ENCODE measurements at regions of chr6 and their contacts with region 1.

Region 1: DNA sequence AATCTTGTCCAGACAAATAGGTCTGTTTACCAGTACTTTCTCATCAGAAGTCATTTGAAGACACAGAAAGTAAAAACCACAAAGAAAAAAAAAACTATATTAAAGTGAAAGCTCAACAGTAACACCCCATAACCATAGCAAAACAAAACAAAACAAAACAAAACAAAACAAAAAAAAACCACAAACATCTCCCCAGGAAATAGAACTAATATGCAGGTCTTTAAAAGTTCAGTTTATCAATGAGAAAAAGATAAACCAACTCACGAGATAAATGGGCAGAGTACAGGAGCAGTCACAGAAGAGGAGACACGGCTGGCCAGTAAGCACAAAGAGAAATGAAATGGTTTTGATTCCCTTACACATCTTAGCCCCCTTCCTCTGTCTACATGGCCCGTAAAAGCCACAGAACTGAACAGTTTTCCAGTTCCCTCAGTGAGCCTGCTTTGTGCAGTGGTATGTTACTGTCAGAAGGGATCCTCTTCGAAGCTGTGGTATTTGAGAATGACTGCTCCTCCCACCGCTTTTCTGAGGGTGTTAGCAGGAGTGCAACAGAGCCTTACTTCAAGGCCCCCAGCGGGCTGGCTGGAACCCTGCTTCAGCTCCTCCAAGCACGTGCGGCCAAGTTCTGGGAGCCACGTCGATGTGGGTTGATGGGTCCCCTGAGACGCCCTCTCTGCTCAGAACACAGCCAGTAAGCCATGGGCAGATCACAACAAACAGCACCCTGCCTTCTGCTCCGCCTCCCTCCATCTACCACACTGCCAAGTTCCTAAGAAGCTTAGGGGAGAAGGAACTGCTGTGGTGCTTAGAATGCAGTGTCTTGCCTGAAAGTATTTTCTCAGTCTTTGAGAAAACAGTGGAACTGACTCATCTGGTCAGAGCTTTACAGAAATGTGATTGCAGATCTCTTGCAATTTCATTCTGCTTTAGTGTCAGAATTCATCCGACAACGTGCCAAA is 14.0 kb downstream of the UST start:
- DNase-seq: peak; percentile 73
- ATAC-seq: peak; percentile 54
- H3K4me3 Mint-ChIP-seq: peak overlapping the region; percentile 84
- H3K27ac Mint-ChIP-seq: peak overlapping the region; percentile 93
- H3K4me1 Mint-ChIP-seq: peaks cover 98% of the 10 kb centered on the region
- H3K27me3 Mint-ChIP-seq: no peaks in the 10 kb centered on the region
- CTCF ChIP-seq: no peak

Region 2: DNA sequence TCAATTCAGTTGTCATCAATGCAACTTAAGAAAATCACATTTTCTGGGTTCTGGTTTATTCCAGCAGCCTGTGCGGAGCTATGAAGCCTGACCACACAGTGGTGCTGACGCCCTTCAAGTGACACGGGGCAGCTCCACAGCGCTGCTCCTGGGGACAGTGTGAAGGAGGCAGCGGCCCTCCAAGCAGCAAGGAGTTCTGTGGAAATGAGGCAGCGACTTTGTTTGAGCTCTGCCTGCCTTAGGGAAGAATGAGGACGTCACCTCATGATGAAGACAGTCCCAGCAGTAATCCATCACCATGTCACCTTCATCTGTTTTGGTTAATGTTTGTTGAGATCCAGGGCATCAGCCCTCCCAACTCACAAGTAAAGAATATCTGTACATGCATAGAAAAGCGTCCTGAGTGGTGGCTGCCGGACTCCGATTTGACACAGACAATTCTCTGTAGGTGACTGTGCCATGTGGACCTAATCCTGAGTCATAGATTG is 182.6 kb before region 1 on chr6:
- CTCF ChIA-PET with region 1: interaction called, 11 read pairs
- POLR2A ChIA-PET with region 1: interaction called, 12 read pairs
- intact Hi-C with region 1: no loop called
- DNase-seq: peak; percentile 56
- ATAC-seq: peak; percentile 100
- H3K4me3 Mint-ChIP-seq: no peak overlapping the region
- H3K27ac Mint-ChIP-seq: peak overlapping the region; percentile 55
- H3K4me1 Mint-ChIP-seq: peaks cover 14% of the 10 kb centered on the region
- H3K27me3 Mint-ChIP-seq: peaks cover 7% of the 10 kb centered on the region
- CTCF ChIP-seq: no peak

Region 3: DNA sequence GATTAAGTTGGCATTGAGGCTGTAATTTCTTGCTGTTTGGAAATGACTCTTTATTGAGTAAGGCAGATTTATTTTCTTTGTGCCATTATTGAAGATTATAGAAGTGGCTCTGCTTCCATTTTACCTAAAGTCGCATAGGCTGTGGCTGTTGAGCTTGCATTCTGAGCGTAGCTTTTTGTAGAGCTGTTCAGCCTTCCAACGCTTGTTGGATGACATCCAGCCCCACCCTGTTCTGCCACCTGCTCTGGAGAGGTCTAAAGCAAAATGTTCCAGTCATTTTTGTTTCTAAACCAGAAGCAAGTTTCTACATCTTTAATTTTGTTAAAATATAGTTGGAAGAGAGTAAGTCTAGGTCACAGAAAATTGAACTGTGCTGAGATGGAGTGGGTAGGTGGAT is 10.4 kb after region 1 on chr6:
- CTCF ChIA-PET with region 1: interaction called, 11 read pairs
- POLR2A ChIA-PET with region 1: interaction called, 36 read pairs
- intact Hi-C with region 1: loop called (anchors 1 kb)
- DNase-seq: no peak
- ATAC-seq: no peak
- H3K4me3 Mint-ChIP-seq: peak overlapping the region; percentile 44
- H3K27ac Mint-ChIP-seq: peak overlapping the region; percentile 24
- H3K4me1 Mint-ChIP-seq: peaks cover 75% of the 10 kb centered on the region
- H3K27me3 Mint-ChIP-seq: no peaks in the 10 kb centered on the region
- CTCF ChIP-seq: no peak

Region 4: GRCh38 chr6:148835920-148836441 is 75.1 kb after region 1 on chr6:
- CTCF ChIA-PET with region 1: interaction called, 3 read pairs
- POLR2A ChIA-PET with region 1: interaction called, 12 read pairs
- intact Hi-C with region 1: loop called (anchors 1 kb)
- DNase-seq: no peak
- ATAC-seq: peak; percentile 69
- H3K4me3 Mint-ChIP-seq: peak overlapping the region; percentile 74
- H3K27ac Mint-ChIP-seq: peak overlapping the region; percentile 84
- H3K4me1 Mint-ChIP-seq: peaks cover 41% of the 10 kb centered on the region
- H3K27me3 Mint-ChIP-seq: no peaks in the 10 kb centered on the region
- CTCF ChIP-seq: no peak

Region 5: GRCh38 chr6:148947621-148948444 is 187.0 kb after region 1 on chr6:
- CTCF ChIA-PET with region 1: interaction called, 4 read pairs
- POLR2A ChIA-PET with region 1: interaction called, 7 read pairs
- intact Hi-C with region 1: loop called (anchors 1 kb)
- DNase-seq: peak; percentile 61
- ATAC-seq: peak; percentile 96
- H3K4me3 Mint-ChIP-seq: no peak overlapping the region
- H3K27ac Mint-ChIP-seq: no peak overlapping the region
- H3K4me1 Mint-ChIP-seq: peaks cover 12% of the 10 kb centered on the region
- H3K27me3 Mint-ChIP-seq: no peaks in the 10 kb centered on the region
- CTCF ChIP-seq: peak; percentile 84

Region 6: GRCh38 chr6:149565527-149566409 is 804.9 kb after region 1 on chr6 and contains the start of gene GINM1:
- CTCF ChIA-PET with region 1: no interaction called
- POLR2A ChIA-PET with region 1: no interaction called
- intact Hi-C with region 1: loop called (anchors 2 kb)
- DNase-seq: peak; percentile 97
- ATAC-seq: peak; percentile 85
- H3K4me3 Mint-ChIP-seq: peak within 1 kb of the TSS; percentile 93
- H3K27ac Mint-ChIP-seq: peak within 1 kb of the TSS; percentile 92
- H3K4me1 Mint-ChIP-seq: peaks cover 22% of the 10 kb centered on the region
- H3K27me3 Mint-ChIP-seq: no peaks in the 10 kb centered on the region
- CTCF ChIP-seq: no peak
- total RNA-seq, gene GINM1: 15.4 and 18.0 TPM in 2 replicates

Measured in activated B cell treated with CpG ODN at 0.5 μM for 24 hours (primary cell).